Activated CD4-positive, alpha-beta T cell treated with anti-CD3 and anti-CD28 coated beads for 36 hours (primary cell): ENCODE measurements at regions of chr9 and their contacts with region 1.

Region 1: DNA sequence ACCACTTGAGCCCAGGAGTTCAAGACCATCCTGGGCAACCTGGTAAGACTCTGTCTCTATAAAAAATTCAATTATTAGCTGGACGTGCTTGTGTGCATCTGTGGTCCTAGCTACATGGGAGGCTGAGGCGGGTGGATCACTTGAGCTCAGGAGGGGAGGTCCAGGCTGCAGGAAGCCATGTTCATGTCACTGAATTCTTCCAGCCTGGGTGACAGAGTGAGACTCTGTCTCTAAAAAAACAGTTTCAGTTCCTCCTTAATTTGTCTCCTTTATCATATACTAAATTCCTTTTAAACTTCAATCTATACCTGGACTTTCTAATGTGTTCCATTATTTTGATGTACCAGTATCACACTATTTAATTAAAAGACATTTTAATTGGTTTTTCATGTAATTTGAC is 422.2 kb upstream of the TLE4 start:
- DNase-seq: no peak
- ATAC-seq: no peak
- H3K4me3 Mint-ChIP-seq: no peak overlapping the region
- H3K27ac Mint-ChIP-seq: no peak overlapping the region
- H3K4me1 Mint-ChIP-seq: no peaks in the 10 kb centered on the region
- H3K27me3 Mint-ChIP-seq: peaks cover 1% of the 10 kb centered on the region

Region 2: GRCh38 chr9:79166000-79166399 is 16.4 kb after region 1 on chr9:
- CTCF ChIA-PET with region 1: no interaction called
- POLR2A ChIA-PET with region 1: no interaction called
- intact Hi-C with region 1: no loop called
- DNase-seq: no peak
- ATAC-seq: no peak
- H3K4me3 Mint-ChIP-seq: no peak overlapping the region
- H3K27ac Mint-ChIP-seq: no peak overlapping the region
- H3K4me1 Mint-ChIP-seq: no peaks in the 10 kb centered on the region
- H3K27me3 Mint-ChIP-seq: no peaks in the 10 kb centered on the region

Region 3: DNA sequence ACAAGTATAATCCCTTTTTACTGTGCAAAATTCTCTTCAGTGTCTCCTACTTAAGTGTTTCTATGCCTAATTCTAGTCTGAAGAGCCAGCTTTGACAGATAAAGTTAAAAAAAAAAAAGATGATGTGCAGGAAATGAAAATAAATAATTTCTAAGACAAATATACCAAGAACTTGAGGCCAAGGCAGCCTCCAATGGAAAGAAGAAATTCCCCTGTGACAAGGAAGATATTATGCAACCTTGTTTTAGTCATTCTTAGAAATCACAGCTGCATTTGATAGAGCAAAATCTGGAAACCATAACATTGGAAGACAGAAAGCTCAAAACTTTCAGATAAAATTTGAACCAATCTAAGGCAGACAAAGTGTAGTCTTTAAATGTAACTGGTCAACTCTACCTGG is 46.3 kb after region 1 on chr9:
- CTCF ChIA-PET with region 1: no interaction called
- POLR2A ChIA-PET with region 1: no interaction called
- intact Hi-C with region 1: loop called in 1 of 2 experiments (anchors 5 kb)
- DNase-seq: no peak
- ATAC-seq: no peak
- H3K4me3 Mint-ChIP-seq: no peak overlapping the region
- H3K27ac Mint-ChIP-seq: no peak overlapping the region
- H3K4me1 Mint-ChIP-seq: no peaks in the 10 kb centered on the region
- H3K27me3 Mint-ChIP-seq: peaks cover 5% of the 10 kb centered on the region